ENCODE measurements at regions of chr3 and their contacts with region 1.

Region 1: DNA sequence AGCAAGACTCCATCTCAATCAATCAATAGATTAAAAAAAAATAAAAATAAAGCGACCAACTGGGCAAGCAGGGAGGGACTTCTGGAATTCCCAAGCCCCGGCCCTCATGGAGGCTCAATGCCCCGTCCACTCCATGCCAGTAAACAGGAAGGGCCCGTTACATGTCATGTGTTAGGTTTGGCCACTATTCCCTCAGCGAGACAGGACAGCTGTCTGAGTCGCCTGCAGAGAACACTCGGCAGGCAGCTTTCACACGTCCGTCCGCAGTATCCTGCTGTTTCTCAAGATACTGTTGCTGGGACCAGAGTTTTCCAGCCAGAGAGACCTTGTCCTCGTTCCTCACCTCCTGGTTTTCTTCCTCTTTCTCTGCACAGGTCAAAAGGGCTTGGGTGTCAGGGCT is 18.0 kb downstream of the TMEM44 start:
- DNase-seq: no peak
- ATAC-seq: no peak

Region 2: GRCh38 chr3:194661946-194662345 is 46.7 kb after region 1 on chr3:
- intact Hi-C with region 1: loop called (anchors 2 kb)
- DNase-seq: no peak
- ATAC-seq: no peak

Region 3: GRCh38 chr3:194800002-194800401 is 184.8 kb after region 1 on chr3:
- intact Hi-C with region 1: no loop called
- DNase-seq: no peak
- ATAC-seq: no peak

Measured in sciatic nerve (tissue), 2 donors.